Heart left ventricle (tissue), 16 donors: ENCODE measurements at regions of chr5 and their contacts with region 1.

Region 1: DNA sequence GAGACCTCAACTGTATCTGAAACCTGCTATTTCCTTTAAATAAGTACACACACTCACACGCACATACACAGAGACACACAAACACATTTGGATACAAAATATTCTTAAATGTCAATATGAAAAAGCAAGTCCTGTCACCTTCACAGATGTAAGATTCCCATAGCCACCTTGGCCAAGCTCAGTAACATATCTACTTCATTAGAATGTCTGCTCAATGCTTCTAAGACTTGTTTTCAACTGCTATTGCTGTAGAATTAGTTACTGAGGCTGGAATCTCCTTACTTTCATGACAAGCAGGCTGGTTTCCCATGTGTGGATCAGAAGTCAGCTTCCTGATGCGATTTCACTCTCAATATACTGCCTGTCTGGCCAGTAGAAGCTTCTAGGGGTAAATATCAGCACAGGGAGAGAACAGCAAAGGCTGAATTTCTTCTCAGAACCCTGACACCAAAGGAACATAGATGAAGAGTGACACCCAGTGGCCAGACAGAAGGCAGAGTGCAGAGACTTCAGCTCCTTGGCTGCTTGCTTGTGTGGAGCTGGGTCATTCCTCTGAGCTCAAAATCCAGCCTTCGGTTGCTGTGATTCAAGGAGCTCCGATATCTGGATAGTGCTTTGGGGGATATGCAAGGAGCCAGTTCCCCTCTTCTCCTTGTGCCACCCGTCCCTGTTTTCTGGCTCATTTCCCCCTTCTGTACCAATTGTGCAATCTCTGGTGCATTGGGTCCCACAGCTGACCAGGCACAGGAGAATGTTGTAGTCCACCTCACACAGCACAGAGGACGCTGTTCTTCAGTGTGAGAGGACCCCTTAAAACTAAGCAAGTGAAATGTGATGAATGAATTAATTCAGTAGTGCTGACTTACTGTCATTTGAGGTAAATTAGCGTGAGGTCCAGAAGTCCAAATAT is 26.6 kb upstream of the ABLIM3 start:
- DNase-seq: peak; percentile 49 to 73 (median 55)
- ATAC-seq: peak; percentile 85 to 97 (median 95)
- H3K4me3 ChIP-seq: no peak overlapping the region
- H3K27ac ChIP-seq: peak overlapping the region in 7 of 12 donors; percentile 2 to 62 (median 38)
- H3K4me1 ChIP-seq: peaks cover 0 to 10% (median 4%) of the 10 kb centered on the region in 12 donors
- H3K27me3 ChIP-seq: no peaks in the 10 kb centered on the region
- CTCF ChIP-seq: peak; percentile 49 to 85 (median 75)
- POLR2A ChIP-seq: no peak

Region 2: GRCh38 chr5:148443998-148444397 is 670.7 kb before region 1 on chr5:
- intact Hi-C with region 1: loop called in 2 of 10 experiments (anchors 10 kb)
- DNase-seq: peak in 3 of 5 donors; percentile 28 to 65 (median 45)
- ATAC-seq: peak; percentile 68 to 83 (median 82)
- H3K4me3 ChIP-seq: no peak overlapping the region
- H3K27ac ChIP-seq: peak overlapping the region in 2 of 12 donors; percentile 6 to 24
- H3K4me1 ChIP-seq: peaks cover 0 to 28% (median 5%) of the 10 kb centered on the region in 12 donors
- H3K27me3 ChIP-seq: no peaks in the 10 kb centered on the region
- CTCF ChIP-seq: peak; percentile 63 to 86 (median 77)
- POLR2A ChIP-seq: no peak

Region 3: GRCh38 chr5:148810823-148811222 is 303.8 kb before region 1 on chr5:
- intact Hi-C with region 1: loop called in 1 of 10 experiments (anchors 5 kb)
- DNase-seq: no peak
- ATAC-seq: no peak
- H3K4me3 ChIP-seq: no peak overlapping the region
- H3K27ac ChIP-seq: peak overlapping the region in 1 of 12 donors; percentile 88
- H3K4me1 ChIP-seq: peaks cover 0 to 64% (median 10%) of the 10 kb centered on the region in 12 donors
- H3K27me3 ChIP-seq: no peaks in the 10 kb centered on the region
- CTCF ChIP-seq: no peak
- POLR2A ChIP-seq: no peak

Region 4: DNA sequence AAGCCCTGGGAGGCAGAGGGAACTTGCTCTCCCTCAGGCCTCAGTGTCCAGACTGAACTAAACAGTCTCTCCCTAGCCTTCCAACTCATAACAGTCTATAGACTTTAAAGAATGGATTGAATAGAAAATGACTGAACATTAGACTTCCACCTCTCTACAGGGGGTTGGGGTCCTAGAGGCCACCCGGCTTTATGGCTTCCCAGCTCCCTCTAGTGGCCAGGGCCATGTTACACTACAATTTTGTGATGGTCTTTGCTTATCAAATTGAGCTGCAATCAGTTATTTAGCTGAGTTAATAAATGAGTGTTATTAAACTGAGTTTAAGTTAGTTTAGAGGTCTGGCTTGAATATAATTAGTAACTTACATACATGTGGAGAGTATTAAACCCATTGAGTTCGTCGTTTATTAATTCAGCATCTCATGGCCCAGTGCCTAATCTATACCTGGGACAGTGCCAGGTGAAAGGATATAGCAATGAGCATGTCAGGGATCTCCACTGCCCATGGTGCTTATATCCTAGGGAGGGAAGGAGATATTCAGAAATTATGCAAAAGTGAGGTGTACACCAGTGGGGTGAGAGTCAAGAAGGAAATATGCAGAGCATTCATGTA is 157.0 kb before region 1 on chr5:
- intact Hi-C with region 1: no loop called
- DNase-seq: peak in 3 of 5 donors; percentile 20 to 47 (median 29)
- ATAC-seq: peak in 2 of 4 donors; percentile 43 to 53
- H3K4me3 ChIP-seq: no peak overlapping the region
- H3K27ac ChIP-seq: no peak overlapping the region
- H3K4me1 ChIP-seq: peaks cover 0 to 12% (median 0%) of the 10 kb centered on the region in 12 donors
- H3K27me3 ChIP-seq: no peaks in the 10 kb centered on the region
- CTCF ChIP-seq: peak; percentile 69 to 88 (median 80)
- POLR2A ChIP-seq: no peak

Region 5: DNA sequence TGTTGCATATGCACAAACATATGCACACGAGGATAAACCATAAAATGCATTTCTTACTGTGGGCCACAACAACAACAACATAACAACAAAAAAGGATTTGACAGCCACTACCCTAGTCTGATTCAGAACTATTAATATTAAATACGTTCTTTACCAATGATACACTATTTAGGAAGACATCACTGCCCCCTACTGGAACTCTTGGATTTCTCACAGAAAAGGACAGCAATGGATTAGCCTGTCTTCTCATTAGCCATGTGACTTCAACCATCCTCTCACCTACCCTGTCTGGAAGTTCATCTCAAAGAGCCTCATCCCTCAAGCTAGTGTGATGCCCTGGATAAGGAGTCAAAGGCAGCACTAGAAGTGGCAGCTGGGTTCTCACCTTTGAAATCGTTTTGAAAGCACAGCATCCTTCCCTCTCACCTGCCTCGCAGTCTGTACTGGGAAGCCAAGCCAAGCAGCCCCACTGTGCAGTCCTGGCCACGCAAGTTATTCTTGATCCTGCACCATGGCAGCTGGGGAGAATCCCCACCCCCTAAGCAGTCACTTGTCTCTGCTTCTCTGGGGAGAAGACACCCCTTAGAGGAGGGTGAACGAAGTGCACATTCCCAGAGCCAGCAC is 116.4 kb before region 1 on chr5:
- intact Hi-C with region 1: loop called in 1 of 10 experiments (anchors 10 kb)
- DNase-seq: peak in 1 of 5 donors; percentile 28
- ATAC-seq: peak in 3 of 4 donors; percentile 47 to 69 (median 69)
- H3K4me3 ChIP-seq: no peak overlapping the region
- H3K27ac ChIP-seq: no peak overlapping the region
- H3K4me1 ChIP-seq: peaks cover 0 to 28% (median 6%) of the 10 kb centered on the region in 12 donors
- H3K27me3 ChIP-seq: no peaks in the 10 kb centered on the region
- CTCF ChIP-seq: peak; percentile 57 to 77 (median 68)
- POLR2A ChIP-seq: no peak

Region 6: DNA sequence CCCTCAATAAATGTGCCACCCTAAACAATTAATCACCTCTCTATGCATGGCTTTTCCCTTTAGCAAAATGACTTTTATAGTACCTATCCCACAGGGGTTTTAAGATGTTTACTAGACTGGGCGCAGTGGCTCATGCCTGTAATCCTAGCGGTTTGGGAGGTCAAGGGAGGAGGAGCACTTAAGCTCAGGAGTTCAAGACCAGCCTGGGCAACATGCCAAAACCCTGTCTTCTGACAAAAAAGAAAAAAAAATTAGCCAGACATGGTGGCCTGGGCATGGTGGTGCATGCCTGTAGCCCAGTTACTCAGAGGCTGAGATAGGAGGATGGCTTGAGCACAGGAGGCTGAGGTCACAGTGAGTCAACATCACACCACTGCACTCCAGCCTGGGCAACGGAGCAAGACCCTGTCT is 65.3 kb before region 1 on chr5:
- intact Hi-C with region 1: no loop called
- DNase-seq: no peak
- ATAC-seq: no peak
- H3K4me3 ChIP-seq: no peak overlapping the region
- H3K27ac ChIP-seq: no peak overlapping the region
- H3K4me1 ChIP-seq: peaks cover 0 to 10% (median 0%) of the 10 kb centered on the region in 12 donors
- H3K27me3 ChIP-seq: no peaks in the 10 kb centered on the region
- CTCF ChIP-seq: no peak
- POLR2A ChIP-seq: no peak

Region 7: GRCh38 chr5:149063017-149063687 is 51.5 kb before region 1 on chr5 and contains the start of gene SH3TC2:
- intact Hi-C with region 1: loop called in 4 of 10 experiments (anchors 5 to 10 kb)
- DNase-seq: peak; percentile 69 to 82 (median 74)
- ATAC-seq: peak; percentile 81 to 91 (median 86)
- H3K4me3 ChIP-seq: peak within 1 kb of the TSS in 2 of 12 donors; percentile 3 to 4
- H3K27ac ChIP-seq: peak within 1 kb of the TSS; percentile 63 to 92 (median 80)
- H3K4me1 ChIP-seq: peaks cover 10 to 61% (median 54%) of the 10 kb centered on the region in 12 donors
- H3K27me3 ChIP-seq: no peaks in the 10 kb centered on the region
- CTCF ChIP-seq: no peak
- POLR2A ChIP-seq: no peak
- total RNA-seq, gene SH3TC2: 2.4 to 12.7 (median 5.9) TPM